ENCODE measurements at regions of chr14 and their contacts with region 1.

Region 1: DNA sequence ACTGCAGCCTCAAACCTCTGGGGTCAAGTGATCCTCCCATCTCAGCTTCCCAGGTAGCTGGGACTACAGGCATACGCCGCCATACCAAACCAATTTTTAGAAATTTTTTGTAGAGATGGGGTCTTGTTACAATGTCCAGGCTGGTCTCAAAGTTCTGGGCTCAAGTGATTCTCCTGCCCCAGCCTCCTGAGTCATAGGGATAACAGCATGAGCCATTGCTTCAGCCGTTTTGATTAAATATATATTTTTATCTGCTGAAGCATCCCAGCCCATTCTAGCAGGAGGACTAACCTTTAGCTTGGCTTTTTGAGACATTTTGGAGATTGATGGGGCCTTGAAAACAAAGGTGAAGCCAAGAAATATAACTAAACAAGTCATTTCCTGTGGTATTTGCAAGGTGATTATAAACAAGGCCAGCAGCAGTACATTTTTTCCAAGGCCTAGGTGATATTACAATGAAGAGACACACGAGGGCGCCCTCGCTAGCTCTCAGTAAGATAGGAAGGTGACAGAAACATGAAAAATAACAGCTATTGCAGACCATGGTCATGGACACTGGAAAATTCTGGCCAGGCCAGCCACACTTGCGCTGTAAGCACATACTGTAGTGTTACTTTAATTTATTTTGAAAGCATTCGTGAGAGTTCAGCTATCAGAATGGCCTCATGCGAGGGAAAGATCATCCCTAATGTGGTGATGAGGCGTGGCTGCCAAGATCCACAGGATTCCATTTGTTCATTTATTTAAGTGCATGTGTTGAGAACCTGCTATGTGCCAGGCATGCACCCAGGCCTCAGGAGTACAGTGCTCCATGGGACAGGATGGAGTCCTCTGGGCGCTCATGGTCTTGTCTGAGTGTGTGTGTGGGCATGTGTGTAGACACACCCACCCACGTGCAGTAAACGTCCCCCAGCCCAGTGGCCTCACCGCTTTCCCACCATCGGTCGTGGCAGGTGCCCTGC is 63.5 kb downstream of the DGLUCY start:
- DNase-seq: peak; percentile 77
- ATAC-seq: peak; percentile 83
- H3K4me3 ChIP-seq: no peak overlapping the region
- H3K4me3 Mint-ChIP-seq: no peak overlapping the region
- H3K27ac ChIP-seq: peak overlapping the region in 1 of 2 donors; percentile 12
- H3K27ac Mint-ChIP-seq: no peak overlapping the region
- H3K4me1 ChIP-seq: peaks cover 0 to 12% of the 10 kb centered on the region in 2 donors
- H3K4me1 Mint-ChIP-seq: peaks cover 7% of the 10 kb centered on the region
- H3K27me3 ChIP-seq: no peaks in the 10 kb centered on the region
- H3K27me3 Mint-ChIP-seq: no peaks in the 10 kb centered on the region
- CTCF ChIP-seq: peak; percentile 95

Region 2: DNA sequence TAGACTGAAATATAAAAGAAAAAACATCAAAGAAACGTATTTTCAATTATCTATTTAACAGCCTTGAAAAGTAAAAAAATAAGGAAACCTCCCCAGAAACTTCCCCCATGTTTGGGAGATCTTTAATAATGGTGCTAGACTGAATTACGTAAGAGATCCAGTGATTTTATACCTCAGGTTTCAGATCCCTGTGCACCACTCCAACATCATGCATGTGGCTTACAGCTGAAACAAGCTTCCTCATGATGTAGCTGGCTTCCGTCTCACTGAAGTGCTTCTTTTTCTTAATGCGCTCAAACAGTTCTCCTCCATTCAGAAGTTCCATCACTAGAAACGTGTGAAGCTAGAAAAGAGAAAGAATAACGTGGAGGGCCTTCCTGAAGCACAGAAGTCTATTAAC is 283.1 kb before region 1 on chr14:
- CTCF ChIA-PET with region 1: interaction called, 20 read pairs
- POLR2A ChIA-PET with region 1: no interaction called
- intact Hi-C with region 1: no loop called
- DNase-seq: no peak
- ATAC-seq: no peak
- H3K4me3 ChIP-seq: no peak overlapping the region
- H3K4me3 Mint-ChIP-seq: no peak overlapping the region
- H3K27ac ChIP-seq: no peak overlapping the region
- H3K27ac Mint-ChIP-seq: no peak overlapping the region
- H3K4me1 ChIP-seq: no peaks in the 10 kb centered on the region
- H3K4me1 Mint-ChIP-seq: no peaks in the 10 kb centered on the region
- H3K27me3 ChIP-seq: no peaks in the 10 kb centered on the region
- H3K27me3 Mint-ChIP-seq: no peaks in the 10 kb centered on the region
- CTCF ChIP-seq: no peak

Region 3: DNA sequence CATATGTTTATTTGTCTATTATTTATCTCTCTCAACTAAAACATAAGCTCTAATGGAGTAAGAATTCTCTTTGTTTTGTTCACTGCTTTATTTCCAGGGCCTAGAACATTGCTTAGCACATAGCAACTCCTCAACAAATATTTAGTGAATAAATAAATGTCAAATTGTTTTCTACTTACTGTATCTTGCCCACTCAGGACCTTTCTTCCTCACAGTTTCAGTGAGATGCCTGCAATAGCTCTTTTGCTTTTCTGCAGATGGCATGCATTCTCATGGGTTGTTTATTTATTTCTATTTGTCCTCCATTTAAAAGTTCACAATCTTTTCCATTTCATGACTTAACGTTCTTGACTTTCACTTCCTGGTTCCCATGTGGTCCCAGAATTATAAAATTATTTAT is 266.2 kb before region 1 on chr14:
- CTCF ChIA-PET with region 1: interaction called, 23 read pairs
- POLR2A ChIA-PET with region 1: no interaction called
- intact Hi-C with region 1: no loop called
- DNase-seq: no peak
- ATAC-seq: no peak
- H3K4me3 ChIP-seq: no peak overlapping the region
- H3K4me3 Mint-ChIP-seq: no peak overlapping the region
- H3K27ac ChIP-seq: no peak overlapping the region
- H3K27ac Mint-ChIP-seq: no peak overlapping the region
- H3K4me1 ChIP-seq: no peaks in the 10 kb centered on the region
- H3K4me1 Mint-ChIP-seq: peaks cover 12% of the 10 kb centered on the region
- H3K27me3 ChIP-seq: no peaks in the 10 kb centered on the region
- H3K27me3 Mint-ChIP-seq: no peaks in the 10 kb centered on the region
- CTCF ChIP-seq: no peak

Region 4: GRCh38 chr14:91071773-91072172 is 105.6 kb before region 1 on chr14:
- CTCF ChIA-PET with region 1: interaction called, 10 read pairs
- POLR2A ChIA-PET with region 1: no interaction called
- intact Hi-C with region 1: no loop called
- DNase-seq: no peak
- ATAC-seq: no peak
- H3K4me3 ChIP-seq: no peak overlapping the region
- H3K4me3 Mint-ChIP-seq: no peak overlapping the region
- H3K27ac ChIP-seq: no peak overlapping the region
- H3K27ac Mint-ChIP-seq: no peak overlapping the region
- H3K4me1 ChIP-seq: peaks cover 5 to 9% of the 10 kb centered on the region in 2 donors
- H3K4me1 Mint-ChIP-seq: peaks cover 10% of the 10 kb centered on the region
- H3K27me3 ChIP-seq: no peaks in the 10 kb centered on the region
- H3K27me3 Mint-ChIP-seq: no peaks in the 10 kb centered on the region
- CTCF ChIP-seq: no peak

Region 5: DNA sequence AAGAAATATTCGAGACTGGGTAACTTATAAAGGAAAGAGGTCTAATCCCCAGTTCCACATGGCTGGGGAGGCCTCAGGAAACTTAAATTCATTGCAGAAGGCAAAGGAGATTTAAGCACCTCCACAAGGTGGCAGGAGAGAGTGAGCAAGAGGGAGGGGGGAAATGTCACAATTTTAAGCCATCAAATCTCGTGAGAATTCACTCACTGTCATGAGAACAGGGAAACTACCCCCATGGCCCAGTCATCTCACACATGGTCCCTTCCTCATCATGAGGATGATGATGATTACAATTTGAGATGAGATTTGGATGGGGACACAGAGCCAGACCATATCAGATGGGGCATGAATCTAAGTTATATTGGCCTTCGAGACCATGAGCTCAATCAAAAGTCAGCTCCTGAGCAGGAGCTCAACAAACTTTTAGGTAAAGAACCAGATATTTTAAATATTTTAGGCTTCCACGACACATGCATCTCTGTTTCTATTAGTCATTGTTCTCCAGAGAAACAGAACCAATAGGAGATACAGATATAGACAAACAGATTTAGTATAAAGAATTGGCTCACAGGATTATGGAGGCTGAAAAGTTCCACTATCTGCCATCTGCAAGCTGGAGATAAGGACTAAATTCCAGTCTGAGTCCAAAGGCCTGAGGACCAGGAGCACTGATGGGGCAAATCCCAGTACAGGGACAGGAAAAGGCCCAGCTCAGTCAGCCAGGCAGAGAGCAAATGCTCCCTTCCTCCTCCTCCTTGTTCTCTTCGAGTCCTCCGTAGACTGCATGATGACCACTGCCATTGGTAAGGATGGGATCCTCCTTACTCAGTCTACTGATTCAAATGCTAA is 38.6 kb before region 1 on chr14:
- CTCF ChIA-PET with region 1: interaction called, 14 read pairs
- POLR2A ChIA-PET with region 1: no interaction called
- intact Hi-C with region 1: no loop called
- DNase-seq: peak; percentile 65
- ATAC-seq: peak; percentile 19
- H3K4me3 ChIP-seq: no peak overlapping the region
- H3K4me3 Mint-ChIP-seq: no peak overlapping the region
- H3K27ac ChIP-seq: no peak overlapping the region
- H3K27ac Mint-ChIP-seq: peak overlapping the region; percentile 71
- H3K4me1 ChIP-seq: peaks cover 12 to 21% of the 10 kb centered on the region in 2 donors
- H3K4me1 Mint-ChIP-seq: peaks cover 37% of the 10 kb centered on the region
- H3K27me3 ChIP-seq: no peaks in the 10 kb centered on the region
- H3K27me3 Mint-ChIP-seq: no peaks in the 10 kb centered on the region
- CTCF ChIP-seq: peak; percentile 36

Region 6: DNA sequence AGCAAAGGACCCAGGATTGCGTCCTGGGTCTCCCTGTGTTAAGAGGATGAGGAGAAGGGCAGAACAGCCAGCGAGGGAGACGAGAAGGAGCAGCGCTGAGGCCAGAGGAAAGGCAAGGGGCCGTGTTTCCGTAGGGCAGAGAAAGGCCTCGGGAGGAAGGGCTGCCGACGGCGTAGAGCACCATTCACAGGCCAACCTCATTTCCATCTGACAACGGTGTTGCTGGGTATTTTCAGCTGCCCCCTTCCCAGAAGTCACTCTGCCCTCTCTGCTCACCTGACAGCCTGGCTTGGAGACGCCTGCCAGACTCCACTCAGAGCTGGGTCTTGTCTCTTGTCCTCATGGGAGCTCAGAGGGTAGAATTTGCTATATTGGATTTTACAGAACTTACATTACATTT is 15.7 kb after region 1 on chr14:
- CTCF ChIA-PET with region 1: interaction called, 17 read pairs
- POLR2A ChIA-PET with region 1: no interaction called
- intact Hi-C with region 1: no loop called
- DNase-seq: no peak
- ATAC-seq: no peak
- H3K4me3 ChIP-seq: no peak overlapping the region
- H3K4me3 Mint-ChIP-seq: no peak overlapping the region
- H3K27ac ChIP-seq: no peak overlapping the region
- H3K27ac Mint-ChIP-seq: no peak overlapping the region
- H3K4me1 ChIP-seq: no peaks in the 10 kb centered on the region
- H3K4me1 Mint-ChIP-seq: no peaks in the 10 kb centered on the region
- H3K27me3 ChIP-seq: no peaks in the 10 kb centered on the region
- H3K27me3 Mint-ChIP-seq: no peaks in the 10 kb centered on the region
- CTCF ChIP-seq: no peak

Region 7: GRCh38 chr14:91286530-91286937 is 109.2 kb after region 1 on chr14:
- CTCF ChIA-PET with region 1: interaction called, 449 read pairs
- POLR2A ChIA-PET with region 1: interaction called, 3 read pairs
- intact Hi-C with region 1: no loop called
- DNase-seq: peak; percentile 79
- ATAC-seq: peak; percentile 79
- H3K4me3 ChIP-seq: no peak overlapping the region
- H3K4me3 Mint-ChIP-seq: no peak overlapping the region
- H3K27ac ChIP-seq: no peak overlapping the region
- H3K27ac Mint-ChIP-seq: peak overlapping the region; percentile 72
- H3K4me1 ChIP-seq: peaks cover 20 to 21% of the 10 kb centered on the region in 2 donors
- H3K4me1 Mint-ChIP-seq: peaks cover 23% of the 10 kb centered on the region
- H3K27me3 ChIP-seq: no peaks in the 10 kb centered on the region
- H3K27me3 Mint-ChIP-seq: no peaks in the 10 kb centered on the region
- CTCF ChIP-seq: peak; percentile 96

Measured in B cell (primary cell).